ENCODE measurements at regions of chr17 and their contacts with region 1.

Region 1: GRCh38 chr17:51046514-51047384 is 73.9 kb downstream of the SPAG9 start:
- DNase-seq: peak; percentile 35 to 80 (median 79)
- H3K4me3 ChIP-seq: peak overlapping the region in 5 of 7 experiments; percentile 9 to 58 (median 33)
- H3K27ac ChIP-seq: no peak overlapping the region
- H3K4me1 ChIP-seq: peaks cover 0 to 10% (median 6%) of the 10 kb centered on the region in 4 experiments
- H3K27me3 ChIP-seq: no peaks in the 10 kb centered on the region

Region 2: GRCh38 chr17:51000835-51001638 is 45.7 kb before region 1 on chr17:
- CTCF ChIA-PET with region 1: interaction called, 10 read pairs
- POLR2A ChIA-PET with region 1: no interaction called
- DNase-seq: peak; percentile 75 to 90 (median 86)
- H3K4me3 ChIP-seq: no peak overlapping the region
- H3K27ac ChIP-seq: no peak overlapping the region
- H3K4me1 ChIP-seq: no peaks in the 10 kb centered on the region
- H3K27me3 ChIP-seq: no peaks in the 10 kb centered on the region

Region 3: DNA sequence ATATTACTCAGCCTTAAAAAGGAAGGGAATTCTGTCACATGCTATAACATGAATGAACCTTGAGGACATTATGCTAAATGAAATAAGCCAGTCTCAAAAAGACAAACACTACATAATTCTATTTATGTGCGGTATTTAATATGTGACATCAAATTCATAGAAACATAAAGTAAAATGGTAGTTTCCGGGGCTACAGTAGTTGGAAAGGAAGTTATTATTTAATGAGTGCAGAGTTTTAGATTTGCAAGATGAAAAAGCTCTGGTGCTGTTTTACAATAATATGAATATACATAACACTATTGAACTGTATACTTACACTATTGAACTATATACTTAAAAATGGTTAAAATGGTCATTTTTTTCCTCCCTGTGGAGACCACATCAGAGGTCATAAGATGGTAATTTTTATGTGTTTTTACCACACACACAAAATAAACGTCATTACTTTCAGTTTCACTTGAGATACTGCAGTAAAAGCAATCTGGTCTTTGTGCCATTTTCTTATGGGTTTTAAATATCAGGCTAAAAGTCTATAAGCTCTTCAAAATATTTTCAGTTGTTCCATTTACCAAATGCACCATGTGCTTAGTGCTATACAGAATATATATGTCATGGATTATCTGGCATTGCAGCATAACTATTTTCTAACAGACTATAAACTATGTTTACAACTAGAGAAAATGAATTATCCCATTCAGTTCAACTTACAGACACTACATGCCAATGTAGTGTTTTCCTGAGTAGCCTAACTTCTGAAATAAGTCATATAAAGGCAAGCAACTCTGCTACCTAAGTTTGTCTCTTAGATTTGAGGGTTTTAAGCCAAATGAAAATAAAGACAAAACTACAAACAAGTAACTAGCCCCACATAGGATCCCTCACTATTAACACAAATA is 16.9 kb before region 1 on chr17:
- CTCF ChIA-PET with region 1: interaction called, 11 read pairs
- POLR2A ChIA-PET with region 1: interaction called, 6 read pairs
- DNase-seq: peak; percentile 42 to 86 (median 75)
- H3K4me3 ChIP-seq: peak overlapping the region in 2 of 7 experiments; percentile 22 to 57
- H3K27ac ChIP-seq: peak overlapping the region in 1 of 2 experiments; percentile 62
- H3K4me1 ChIP-seq: peaks cover 6 to 16% (median 10%) of the 10 kb centered on the region in 4 experiments
- H3K27me3 ChIP-seq: no peaks in the 10 kb centered on the region

Region 4: GRCh38 chr17:51035431-51035830 is 11.3 kb before region 1 on chr17:
- CTCF ChIA-PET with region 1: interaction called, 11 read pairs
- POLR2A ChIA-PET with region 1: interaction called, 4 read pairs
- DNase-seq: peak in 2 of 3 donors; percentile 52 to 71
- H3K4me3 ChIP-seq: peak overlapping the region in 2 of 7 experiments; percentile 29 to 43
- H3K27ac ChIP-seq: no peak overlapping the region
- H3K4me1 ChIP-seq: peaks cover 20 to 28% (median 23%) of the 10 kb centered on the region in 4 experiments
- H3K27me3 ChIP-seq: no peaks in the 10 kb centered on the region

Region 5: GRCh38 chr17:51056813-51057510 is 10.2 kb after region 1 on chr17:
- CTCF ChIA-PET with region 1: interaction called, 18 read pairs
- POLR2A ChIA-PET with region 1: interaction called, 4 read pairs
- DNase-seq: peak; percentile 68 to 84 (median 81)
- H3K4me3 ChIP-seq: no peak overlapping the region
- H3K27ac ChIP-seq: peak overlapping the region in 1 of 2 experiments; percentile 12
- H3K4me1 ChIP-seq: peaks cover 0 to 11% (median 4%) of the 10 kb centered on the region in 4 experiments
- H3K27me3 ChIP-seq: no peaks in the 10 kb centered on the region

Measured in common myeloid progenitor, CD34-positive (primary cell).